Dorsolateral prefrontal cortex (tissue), 120 donors: ENCODE measurements at regions of chr7 and their contacts with region 1.

Region 1: DNA sequence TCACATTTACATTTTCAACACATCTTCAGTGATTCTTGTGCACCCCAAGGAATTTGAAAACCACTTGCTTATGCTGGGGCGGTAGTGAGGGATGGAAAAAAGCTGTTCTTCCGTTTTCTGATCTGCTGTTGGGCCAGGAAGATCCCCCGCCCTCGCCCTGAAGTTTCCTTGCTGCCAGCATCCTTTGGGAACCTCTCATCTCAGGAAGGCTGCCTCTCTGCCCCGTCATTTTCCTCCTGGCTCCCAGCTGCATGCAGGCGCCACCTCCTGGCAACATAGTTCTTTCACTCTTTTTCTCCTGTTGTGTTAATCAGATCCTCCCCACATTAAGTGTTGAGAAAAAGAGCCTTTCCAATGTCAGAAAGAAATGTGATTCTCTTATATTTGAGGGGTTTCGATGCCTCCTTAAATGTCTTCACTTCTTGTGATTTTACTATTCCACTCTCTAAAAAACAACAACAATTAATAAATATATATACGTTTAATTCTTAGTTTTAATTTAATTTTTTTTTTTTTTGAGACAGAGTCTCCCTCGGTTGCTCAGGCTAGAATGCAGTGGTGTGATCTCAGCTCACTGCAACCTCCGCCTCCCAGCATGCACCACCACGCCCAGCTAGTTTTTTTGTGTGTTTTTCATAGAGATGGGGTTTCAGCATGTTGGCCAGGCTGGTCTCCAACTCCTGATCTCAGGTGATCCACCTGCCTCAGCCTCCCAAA is 122.9 kb downstream of the RALA start:
- DNase-seq: peak; percentile 50 to 84 (median 78)
- H3K4me3 ChIP-seq: no peak overlapping the region
- H3K27ac ChIP-seq: no peak overlapping the region
- H3K27me3 ChIP-seq: no peaks in the 10 kb centered on the region
- CTCF ChIP-seq: peak; percentile 46 to 91 (median 78)

Region 2: DNA sequence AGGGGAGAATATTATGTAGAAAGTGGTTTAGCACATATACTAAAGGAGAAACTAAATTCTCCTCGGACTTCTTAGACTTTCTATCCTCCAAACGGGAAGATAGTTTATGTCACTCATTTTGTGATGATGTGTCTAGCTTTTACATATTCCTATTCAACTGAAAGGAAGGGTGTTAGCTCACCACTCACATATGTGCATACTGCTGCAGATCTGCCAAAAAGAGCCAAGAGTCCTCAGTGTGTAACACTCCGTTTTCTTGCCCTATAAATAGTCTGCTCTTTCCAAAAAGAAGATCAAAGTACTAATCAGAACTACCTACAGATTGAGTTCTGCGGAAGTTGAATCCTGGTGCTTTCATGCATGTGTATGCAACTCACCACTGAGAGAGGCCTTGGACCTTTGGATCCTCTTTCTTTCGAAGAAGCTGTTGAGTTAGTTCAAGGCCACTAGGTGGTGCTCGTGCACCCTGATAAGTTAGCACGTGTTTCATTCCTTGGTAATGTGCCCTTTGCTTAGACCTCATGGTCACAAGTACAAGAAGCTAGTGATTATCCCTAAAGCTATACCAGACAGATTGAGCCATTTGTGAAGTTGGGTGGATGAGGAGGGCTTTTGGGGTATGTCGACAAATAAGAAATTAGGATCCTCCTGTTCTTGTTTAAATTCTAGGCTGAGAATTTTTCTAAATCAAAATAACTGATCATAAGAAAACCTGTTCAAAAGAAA is 165.9 kb before region 1 on chr7:
- intact Hi-C with region 1: loop called (anchors 1 to 5 kb)
- DNase-seq: peak; percentile 41 to 81 (median 70)
- H3K4me3 ChIP-seq: no peak overlapping the region
- H3K27ac ChIP-seq: no peak overlapping the region
- H3K27me3 ChIP-seq: no peaks in the 10 kb centered on the region
- CTCF ChIP-seq: peak; percentile 79 to 99 (median 92)